HEK293 (cell line): ENCODE measurements at regions of chr7 and their contacts with region 1.

Region 1: GRCh38 chr7:55953707-55954475 is 2.2 kb downstream of the MRPS17 start:
- H3K4me3 ChIP-seq: no peak overlapping the region
- H3K27ac ChIP-seq: no peak overlapping the region
- H3K4me1 ChIP-seq: no peaks in the 10 kb centered on the region
- CTCF ChIP-seq: no peak

Region 2: DNA sequence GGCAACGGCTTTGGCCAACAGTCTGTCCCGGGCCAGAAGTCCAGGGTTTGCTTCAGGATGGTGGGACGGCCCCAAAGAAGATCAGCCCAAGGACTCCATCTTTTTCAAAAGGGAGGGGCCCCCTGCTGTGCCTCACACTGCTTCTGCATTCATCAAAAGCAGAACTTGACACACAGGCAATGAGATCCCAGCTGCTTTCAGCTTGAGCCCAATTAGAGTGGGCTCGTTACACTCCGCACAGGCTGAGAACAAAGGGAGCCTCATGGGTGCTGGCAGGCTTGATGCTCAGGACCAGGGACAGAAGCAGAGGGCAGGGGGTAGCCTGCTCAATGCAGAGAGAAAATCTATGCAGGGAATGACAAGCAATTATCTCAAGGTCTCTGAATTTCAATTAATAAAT is 427.1 kb before region 1 on chr7:
- CTCF ChIA-PET with region 1: no interaction called
- POLR2A ChIA-PET with region 1: no interaction called
- H3K4me3 ChIP-seq: no peak overlapping the region
- H3K27ac ChIP-seq: no peak overlapping the region
- H3K4me1 ChIP-seq: peaks cover 4% of the 10 kb centered on the region; the same call in 1 of the 2 replicates
- CTCF ChIP-seq: no peak

Region 3: DNA sequence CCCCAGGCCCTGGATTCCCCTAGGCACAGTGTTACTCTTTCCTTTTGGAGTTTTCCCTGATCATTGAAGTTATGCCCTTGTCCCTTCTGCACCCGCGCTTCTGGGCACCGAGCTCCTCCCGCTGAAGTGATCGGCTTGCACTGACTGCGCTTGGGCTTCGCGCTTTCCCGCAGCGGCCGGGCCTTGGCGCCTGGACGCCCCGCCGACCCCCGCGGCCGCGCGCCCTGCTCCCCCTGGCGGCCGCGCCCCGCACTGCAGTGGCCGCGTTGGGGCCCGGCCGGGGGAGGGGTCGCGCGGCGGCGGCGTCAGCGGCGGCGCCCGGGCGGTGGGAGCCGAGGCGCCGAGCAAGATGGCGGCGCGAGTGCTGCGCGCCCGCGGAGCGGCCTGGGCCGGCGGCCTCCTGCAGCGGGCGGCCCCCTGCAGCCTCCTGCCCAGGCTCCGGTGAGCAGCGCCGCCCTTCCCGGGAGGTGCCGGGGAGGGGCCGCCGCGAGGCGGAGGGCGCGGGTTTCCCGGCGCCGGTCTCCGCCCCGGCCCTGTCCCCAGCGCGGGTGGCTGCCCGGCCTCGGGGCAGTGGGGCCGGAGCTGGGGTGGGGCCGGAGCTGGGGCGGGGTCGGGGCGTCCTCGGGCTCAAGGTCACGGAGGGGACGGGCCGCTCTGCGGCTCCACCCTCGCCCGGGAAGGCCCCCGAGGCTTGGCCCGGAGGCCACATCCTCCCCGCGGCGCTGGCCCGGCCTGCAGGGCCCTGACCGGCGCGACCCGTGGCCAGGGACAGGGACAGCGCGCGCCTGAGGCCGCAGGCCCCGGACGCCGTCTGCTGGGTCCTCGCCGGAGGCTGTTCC is 10.6 kb after region 1 on chr7 and contains the start of gene NIPSNAP2:
- CTCF ChIA-PET with region 1: interaction called, 19 read pairs
- POLR2A ChIA-PET with region 1: interaction called, 4 read pairs
- H3K4me3 ChIP-seq: peak within 1 kb of the TSS; percentile 71
- H3K27ac ChIP-seq: peak within 1 kb of the TSS; percentile 81
- H3K4me1 ChIP-seq: 0 out of 2 replicates have a peak, but pooled peaks cover 2% of the 10 kb centered on the region
- CTCF ChIP-seq: no peak